ENCODE measurements at regions of chr4 and their contacts with region 1.

Region 1: GRCh38 chr4:42865572-42866189 is 26.8 kb upstream of the GRXCR1 start:
- DNase-seq: peak; percentile 13 to 58 (median 31)
- ATAC-seq: peak; percentile 57; the same call in 2 of the 3 replicates
- H3K4me3 ChIP-seq: no peak overlapping the region
- H3K27ac ChIP-seq: no peak overlapping the region
- H3K4me1 ChIP-seq: no peaks in the 10 kb centered on the region
- H3K27me3 ChIP-seq: no peaks in the 10 kb centered on the region
- CTCF ChIP-seq: peak; percentile 41 to 68 (median 57); a peak in 5 of 6 replicates
- EP300 ChIP-seq: no peak
- POLR2A ChIP-seq: no peak
- RAD21 ChIP-seq: peak; percentile 56 to 63

Region 2: GRCh38 chr4:42282081-42282901 is 583.4 kb before region 1 on chr4:
- CTCF ChIA-PET with region 1: interaction called, 5 read pairs
- POLR2A ChIA-PET with region 1: no interaction called
- in situ Hi-C with region 1: no loop called
- intact Hi-C with region 1: loop called (anchors 5 kb)
- DNase-seq: peak; percentile 59 to 69 (median 62)
- ATAC-seq: peak; percentile 95
- H3K4me3 ChIP-seq: no peak overlapping the region
- H3K27ac ChIP-seq: no peak overlapping the region
- H3K4me1 ChIP-seq: no peaks in the 10 kb centered on the region
- H3K27me3 ChIP-seq: no peaks in the 10 kb centered on the region
- CTCF ChIP-seq: peak; percentile 65 to 79 (median 76)
- EP300 ChIP-seq: no peak
- POLR2A ChIP-seq: no peak
- RAD21 ChIP-seq: peak; percentile 57 to 70

Region 3: GRCh38 chr4:42568610-42569207 is 297.0 kb before region 1 on chr4:
- CTCF ChIA-PET with region 1: interaction called, 20 read pairs
- POLR2A ChIA-PET with region 1: no interaction called
- in situ Hi-C with region 1: loop called (anchors 10 kb)
- intact Hi-C with region 1: loop called (anchors 1 kb)
- DNase-seq: peak; percentile 30 to 73 (median 38)
- ATAC-seq: peak; percentile 94
- H3K4me3 ChIP-seq: no peak overlapping the region
- H3K27ac ChIP-seq: no peak overlapping the region
- H3K4me1 ChIP-seq: no peaks in the 10 kb centered on the region
- H3K27me3 ChIP-seq: no peaks in the 10 kb centered on the region; a peak in 1 of 5 replicates
- CTCF ChIP-seq: peak; percentile 50 to 72 (median 57); a peak in 5 of 6 replicates
- EP300 ChIP-seq: no peak
- POLR2A ChIP-seq: no peak
- RAD21 ChIP-seq: peak; percentile 63 to 73